ENCODE measurements at regions of chr10 and their contacts with region 1.

Region 1: GRCh38 chr10:77195101-77195500 is 442.5 kb downstream of the KCNMA1 start:
- DNase-seq: peak; percentile 91
- H3K4me3 ChIP-seq: no peak overlapping the region
- H3K27ac ChIP-seq: peak overlapping the region; percentile 84 to 93 (median 86)
- H3K4me1 ChIP-seq: peaks cover 0 to 71% (median 55%) of the 10 kb centered on the region in 4 donors
- H3K27me3 ChIP-seq: no peaks in the 10 kb centered on the region
- CTCF ChIP-seq: no peak
- EP300 ChIP-seq: peak; percentile 88 to 99 (median 91)
- POLR2A ChIP-seq: no peak

Region 2: DNA sequence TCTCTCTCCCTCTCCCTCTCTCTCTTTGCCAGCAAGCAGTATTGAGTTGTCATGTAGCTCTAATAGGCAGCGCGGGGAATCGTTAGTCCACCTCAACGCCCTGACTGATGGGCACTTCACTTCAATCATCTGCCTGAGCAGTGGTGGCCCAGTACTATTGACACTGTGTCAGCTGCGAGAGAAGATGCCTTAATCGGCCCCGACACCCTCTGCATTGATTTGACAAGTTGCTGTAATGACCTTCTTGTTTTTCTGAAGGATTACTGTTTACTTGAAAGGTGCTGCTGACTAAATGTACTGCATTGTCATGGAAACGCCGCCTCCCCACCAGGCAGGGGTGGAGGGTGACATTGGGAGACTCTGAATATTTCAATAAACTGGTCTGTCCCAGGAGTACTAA is 471.3 kb before region 1 on chr10:
- intact Hi-C with region 1: no loop called
- DNase-seq: no peak
- H3K4me3 ChIP-seq: no peak overlapping the region
- H3K27ac ChIP-seq: no peak overlapping the region
- H3K4me1 ChIP-seq: no peaks in the 10 kb centered on the region
- H3K27me3 ChIP-seq: no peaks in the 10 kb centered on the region
- CTCF ChIP-seq: no peak
- EP300 ChIP-seq: no peak
- POLR2A ChIP-seq: no peak

Region 3: DNA sequence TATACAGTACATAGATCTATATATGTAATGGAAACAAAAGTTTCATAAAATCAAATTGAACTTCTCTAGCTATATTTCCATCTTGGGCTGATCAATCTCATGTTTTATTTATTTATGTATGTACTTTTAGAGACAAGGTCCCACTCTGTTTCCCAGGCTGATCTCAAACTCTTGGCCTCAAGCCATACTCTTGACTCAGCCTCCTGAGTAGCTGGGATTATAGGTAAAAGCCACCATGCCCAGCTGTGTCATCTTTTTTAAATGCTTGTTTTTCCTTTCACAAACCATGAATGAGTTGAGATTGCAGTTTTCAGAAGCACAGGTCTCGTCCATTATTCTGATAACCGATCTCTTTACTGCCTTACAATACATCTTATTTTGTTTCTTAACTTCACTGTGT is 41.6 kb after region 1 on chr10:
- intact Hi-C with region 1: loop called (anchors 2 kb)
- DNase-seq: no peak
- H3K4me3 ChIP-seq: no peak overlapping the region
- H3K27ac ChIP-seq: peak overlapping the region in 3 of 4 donors; percentile 85 to 91 (median 87)
- H3K4me1 ChIP-seq: peaks cover 0 to 75% (median 60%) of the 10 kb centered on the region in 4 donors
- H3K27me3 ChIP-seq: no peaks in the 10 kb centered on the region
- CTCF ChIP-seq: no peak
- EP300 ChIP-seq: no peak
- POLR2A ChIP-seq: no peak

Region 4: DNA sequence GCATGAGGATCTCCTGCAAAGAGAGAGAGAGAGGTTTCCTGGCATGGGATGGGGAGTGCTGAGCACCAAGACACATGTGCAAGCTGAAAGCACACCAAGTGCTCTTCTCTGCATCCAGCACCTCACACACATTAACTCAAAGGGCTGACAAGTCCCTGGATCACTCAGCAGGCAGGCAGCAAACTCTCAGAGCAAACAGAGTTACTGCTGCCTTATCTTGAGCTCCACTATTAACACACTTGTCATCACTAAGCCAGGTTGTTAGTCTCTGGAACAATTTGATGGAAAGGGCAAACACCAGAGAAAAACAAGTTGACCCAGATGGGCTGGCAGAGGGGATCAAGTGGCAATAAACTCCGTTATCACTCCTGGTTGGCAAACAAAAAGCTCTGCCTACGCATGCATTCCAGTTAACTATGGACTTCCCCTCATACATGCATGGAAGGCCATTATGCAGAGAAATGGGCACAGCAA is 92.6 kb after region 1 on chr10:
- intact Hi-C with region 1: loop called (anchors 5 kb)
- DNase-seq: peak; percentile 84
- H3K4me3 ChIP-seq: no peak overlapping the region
- H3K27ac ChIP-seq: peak overlapping the region; percentile 64 to 78 (median 72)
- H3K4me1 ChIP-seq: peaks cover 4 to 93% (median 75%) of the 10 kb centered on the region in 4 donors
- H3K27me3 ChIP-seq: no peaks in the 10 kb centered on the region
- CTCF ChIP-seq: no peak
- EP300 ChIP-seq: peak; percentile 6 to 90 (median 36)
- POLR2A ChIP-seq: no peak

Measured in sigmoid colon (tissue), 7 donors.